Heart left ventricle (tissue), 16 donors: ENCODE measurements at regions of chr2 and their contacts with region 1.

Region 1: DNA sequence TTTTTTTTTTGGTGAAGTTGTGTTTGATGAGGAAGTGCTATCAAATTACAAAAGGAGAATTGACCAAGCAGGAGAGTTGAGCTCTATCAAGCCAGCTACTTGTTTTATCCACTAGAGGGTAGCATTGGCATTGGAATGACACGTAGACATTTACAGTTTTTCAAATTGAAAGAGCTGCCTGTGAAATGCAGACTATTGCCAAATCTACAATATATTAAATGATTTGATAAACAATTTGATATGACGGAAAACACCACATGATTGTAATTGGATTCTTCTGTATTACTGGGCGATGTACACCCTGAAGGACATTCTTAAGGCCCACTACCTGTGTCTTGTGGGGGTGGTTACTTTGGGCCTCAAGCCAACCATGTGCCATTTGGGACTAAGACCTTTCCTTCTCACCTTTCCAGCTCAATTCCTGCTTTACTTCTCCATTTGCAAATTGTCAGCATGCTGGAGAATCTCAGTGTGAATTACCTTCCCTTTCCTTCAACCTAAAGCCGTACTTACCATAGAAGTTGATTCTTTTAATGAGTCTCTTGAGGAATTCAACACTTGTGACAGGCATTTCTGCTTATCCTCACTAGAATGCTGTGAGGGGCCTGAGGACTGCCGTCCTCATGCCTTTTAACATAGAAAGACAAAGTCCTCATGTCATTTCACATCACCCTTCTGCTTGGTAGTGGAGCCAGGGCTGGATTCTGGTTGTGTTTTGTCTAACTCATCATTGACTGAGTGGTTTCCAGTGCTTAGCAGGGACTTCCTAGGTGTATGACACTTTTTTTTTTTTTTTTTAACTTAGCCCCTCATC is 134.8 kb upstream of the THUMPD2 start:
- DNase-seq: peak in 1 of 5 donors; percentile 23
- ATAC-seq: peak in 3 of 4 donors; percentile 70 to 79 (median 72)
- H3K4me3 ChIP-seq: no peak overlapping the region
- H3K27ac ChIP-seq: peak overlapping the region in 1 of 12 donors; percentile 18
- H3K4me1 ChIP-seq: peaks cover 0 to 10% (median 2%) of the 10 kb centered on the region in 12 donors
- H3K27me3 ChIP-seq: peaks cover 0 to 2% (median 0%) of the 10 kb centered on the region in 9 donors
- CTCF ChIP-seq: peak; percentile 61 to 89 (median 81)
- POLR2A ChIP-seq: no peak

Region 2: GRCh38 chr2:40244675-40245074 is 330.8 kb after region 1 on chr2:
- intact Hi-C with region 1: loop called in 1 of 10 experiments (anchors 10 kb)
- DNase-seq: peak in 4 of 5 donors; percentile 61 to 70 (median 68)
- ATAC-seq: peak; percentile 34 to 70 (median 68)
- H3K4me3 ChIP-seq: no peak overlapping the region
- H3K27ac ChIP-seq: peak overlapping the region in 10 of 12 donors; percentile 23 to 68 (median 54)
- H3K4me1 ChIP-seq: peaks cover 0 to 76% (median 46%) of the 10 kb centered on the region in 12 donors
- H3K27me3 ChIP-seq: no peaks in the 10 kb centered on the region
- CTCF ChIP-seq: peak; percentile 16 to 65 (median 54)
- POLR2A ChIP-seq: no peak

Region 3: GRCh38 chr2:40554668-40555285 is 640.9 kb after region 1 on chr2:
- intact Hi-C with region 1: loop called in 9 of 10 experiments (anchors 2 to 10 kb)
- DNase-seq: peak in 4 of 5 donors; percentile 48 to 74 (median 64)
- ATAC-seq: peak in 3 of 4 donors; percentile 81 to 83 (median 83)
- H3K4me3 ChIP-seq: peak overlapping the region in 2 of 12 donors; percentile 3 to 24
- H3K27ac ChIP-seq: peak overlapping the region in 2 of 12 donors; percentile 55 to 60
- H3K4me1 ChIP-seq: peaks cover 0 to 11% (median 0%) of the 10 kb centered on the region in 12 donors
- H3K27me3 ChIP-seq: no peaks in the 10 kb centered on the region
- CTCF ChIP-seq: peak; percentile 81 to 96 (median 90)
- POLR2A ChIP-seq: no peak

Region 4: GRCh38 chr2:41393621-41394020 is 1479.8 kb after region 1 on chr2:
- intact Hi-C with region 1: loop called in 1 of 10 experiments (anchors 5 kb)
- DNase-seq: no peak
- ATAC-seq: no peak
- H3K4me3 ChIP-seq: no peak overlapping the region
- H3K27ac ChIP-seq: no peak overlapping the region
- H3K4me1 ChIP-seq: no peaks in the 10 kb centered on the region
- H3K27me3 ChIP-seq: no peaks in the 10 kb centered on the region
- CTCF ChIP-seq: no peak
- POLR2A ChIP-seq: no peak

Region 5: GRCh38 chr2:41698678-41699422 is 1785.0 kb after region 1 on chr2:
- intact Hi-C with region 1: loop called in 8 of 10 experiments (anchors 5 to 10 kb)
- DNase-seq: peak; percentile 44 to 66 (median 48)
- ATAC-seq: peak; percentile 59 to 71 (median 68)
- H3K4me3 ChIP-seq: peak overlapping the region in 8 of 12 donors; percentile 18 to 42 (median 27)
- H3K27ac ChIP-seq: no peak overlapping the region
- H3K4me1 ChIP-seq: peaks cover 0 to 10% (median 0%) of the 10 kb centered on the region in 12 donors
- H3K27me3 ChIP-seq: no peaks in the 10 kb centered on the region
- CTCF ChIP-seq: peak; percentile 71 to 95 (median 88)
- POLR2A ChIP-seq: no peak

Region 6: DNA sequence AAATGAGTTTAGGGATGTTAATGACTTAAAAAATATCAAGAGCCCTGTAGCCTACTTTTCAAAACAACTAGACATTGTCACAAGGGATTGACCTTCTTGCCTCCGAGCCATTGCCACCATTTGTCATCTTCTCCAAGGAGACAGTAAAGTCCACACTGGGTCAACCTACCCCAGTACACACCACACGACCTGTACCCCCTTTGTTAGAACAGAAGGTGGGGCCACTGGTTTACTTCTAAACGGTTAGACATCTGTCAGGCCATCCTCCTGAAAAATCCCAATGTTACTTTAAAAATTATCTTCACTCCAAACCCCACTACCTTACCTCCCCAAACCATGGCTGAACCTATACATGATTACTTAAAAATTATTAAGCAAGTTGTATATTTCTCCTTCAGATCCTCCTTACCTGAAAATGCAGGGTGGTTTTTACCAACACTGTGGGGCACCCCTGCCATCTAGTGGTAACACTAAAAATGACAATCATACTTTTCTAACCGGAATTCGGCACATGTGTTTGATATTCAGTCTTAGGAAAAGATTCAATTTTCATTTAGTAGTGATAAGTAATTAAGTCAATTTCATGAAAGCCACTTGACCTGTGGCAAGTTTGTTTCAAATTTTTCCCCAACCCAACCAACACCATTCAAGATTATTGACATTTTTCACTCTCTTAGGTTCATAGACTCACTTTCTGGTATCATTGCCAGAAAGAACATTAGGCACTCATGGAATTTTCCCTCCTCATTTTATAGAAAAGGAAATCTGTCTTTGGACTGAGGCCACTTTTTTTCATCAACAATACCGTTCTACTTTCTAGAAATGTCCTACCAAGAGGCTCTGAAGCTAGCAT is 1868.7 kb after region 1 on chr2:
- intact Hi-C with region 1: loop called in 8 of 10 experiments (anchors 5 to 10 kb)
- DNase-seq: peak in 1 of 5 donors; percentile 18
- ATAC-seq: no peak
- H3K4me3 ChIP-seq: no peak overlapping the region
- H3K27ac ChIP-seq: no peak overlapping the region
- H3K4me1 ChIP-seq: peaks cover 0 to 12% (median 0%) of the 10 kb centered on the region in 12 donors
- H3K27me3 ChIP-seq: no peaks in the 10 kb centered on the region
- CTCF ChIP-seq: peak; percentile 70 to 91 (median 84)
- POLR2A ChIP-seq: no peak